Gastrocnemius medialis (tissue), 4 donors: ENCODE measurements at regions of chr18 and their contacts with region 1.

Region 1: DNA sequence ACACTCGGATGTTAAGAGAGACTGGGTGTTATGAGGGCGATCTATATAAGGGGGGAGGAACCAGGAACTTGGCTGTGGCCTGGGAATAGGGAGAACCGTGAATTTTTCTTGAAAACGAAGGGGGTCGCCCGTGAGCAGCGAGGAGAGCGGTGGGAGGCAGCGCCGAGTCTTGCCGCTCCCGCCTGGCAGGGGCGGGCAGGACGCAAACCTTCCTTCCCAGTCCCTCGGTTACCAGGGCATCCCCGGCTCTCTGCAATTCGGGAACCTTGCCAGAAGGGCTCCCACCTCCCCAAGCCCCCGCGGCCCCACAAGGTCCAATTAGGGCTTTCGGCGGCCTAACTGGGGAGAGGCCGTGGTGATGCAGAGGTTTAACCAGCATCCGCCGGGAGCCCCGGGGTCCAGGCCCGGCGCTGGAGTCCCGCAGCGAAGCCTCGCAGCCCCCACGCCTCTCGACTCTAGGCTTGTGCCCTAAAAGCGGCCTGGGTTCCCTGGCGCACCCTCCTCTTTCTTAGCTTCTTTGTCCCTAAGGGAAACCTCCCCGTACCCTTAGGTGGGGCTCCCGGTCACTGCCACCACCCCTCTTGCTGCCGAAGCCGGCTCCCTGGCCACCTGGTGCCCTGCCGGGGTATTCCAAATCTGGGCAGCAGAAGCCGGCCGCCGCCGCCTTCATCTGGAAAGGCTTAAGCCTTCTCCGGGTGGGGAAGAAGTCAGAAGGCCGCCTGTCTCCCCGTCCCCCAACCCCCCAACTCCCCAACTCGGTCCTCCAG is 680 bp upstream of the FHOD3 start:
- DNase-seq: no peak
- ATAC-seq: peak; percentile 37 to 38
- H3K4me3 ChIP-seq: peak overlapping the region; percentile 66 to 99 (median 74)
- H3K27ac ChIP-seq: peak overlapping the region; percentile 71 to 87 (median 82)
- H3K4me1 ChIP-seq: peaks cover 9 to 28% of the 10 kb centered on the region in 2 donors
- H3K27me3 ChIP-seq: no peaks in the 10 kb centered on the region
- CTCF ChIP-seq: peak in 1 of 5 experiments; percentile 11
- POLR2A ChIP-seq: no peak

Region 2: GRCh38 chr18:35756506-35757117 is 540.2 kb before region 1 on chr18:
- in situ Hi-C with region 1: loop called in 1 of 4 experiments (anchors 25 kb)
- intact Hi-C with region 1: no loop called
- DNase-seq: peak in 1 of 2 donors; percentile 22
- ATAC-seq: peak; percentile 54 to 66
- H3K4me3 ChIP-seq: no peak overlapping the region
- H3K27ac ChIP-seq: no peak overlapping the region
- H3K4me1 ChIP-seq: no peaks in the 10 kb centered on the region
- H3K27me3 ChIP-seq: no peaks in the 10 kb centered on the region
- CTCF ChIP-seq: peak; percentile 46 to 73 (median 60)
- POLR2A ChIP-seq: no peak

Region 3: DNA sequence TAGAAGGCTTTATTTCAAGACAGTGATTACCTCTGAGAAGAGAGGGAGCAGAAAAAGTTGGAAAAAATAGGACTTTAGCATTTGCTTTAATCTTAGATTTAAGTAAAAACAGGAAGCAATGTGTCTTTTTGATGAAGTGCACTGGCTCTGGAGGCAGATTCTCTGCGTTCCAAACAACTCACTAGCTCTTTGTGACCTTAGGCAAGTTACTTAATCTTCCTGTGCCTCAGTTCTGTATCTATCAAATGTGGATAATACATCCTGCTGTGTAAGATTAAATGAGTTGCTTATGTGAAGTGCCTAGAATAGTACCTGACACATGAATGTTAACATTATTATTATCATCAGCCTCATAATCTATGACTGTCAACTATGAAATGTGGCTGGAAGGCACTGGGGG is 271.8 kb before region 1 on chr18:
- in situ Hi-C with region 1: loop called in 1 of 4 experiments (anchors 5 kb)
- intact Hi-C with region 1: no loop called
- DNase-seq: no peak
- ATAC-seq: no peak
- H3K4me3 ChIP-seq: no peak overlapping the region
- H3K27ac ChIP-seq: no peak overlapping the region
- H3K4me1 ChIP-seq: no peaks in the 10 kb centered on the region
- H3K27me3 ChIP-seq: no peaks in the 10 kb centered on the region
- CTCF ChIP-seq: no peak
- POLR2A ChIP-seq: no peak

Region 4: GRCh38 chr18:36129300-36130038 is 167.4 kb before region 1 on chr18 and contains the starts of genes ELP2 and SLC39A6:
- in situ Hi-C with region 1: no loop called
- intact Hi-C with region 1: loop called (anchors 5 kb)
- DNase-seq: peak; percentile 96 to 98
- ATAC-seq: peak; percentile 96 to 97
- H3K4me3 ChIP-seq: peak within 1 kb of the TSS; percentile 93 to 100 (median 97)
- H3K27ac ChIP-seq: peak within 1 kb of the TSS; percentile 99 to 100 (median 100)
- H3K4me1 ChIP-seq: peaks cover 23 to 30% of the 10 kb centered on the region in 2 donors
- H3K27me3 ChIP-seq: no peaks in the 10 kb centered on the region
- CTCF ChIP-seq: no peak
- POLR2A ChIP-seq: peak; percentile 68 to 72
- total RNA-seq, gene ELP2: 23.7 to 51.0 (median 42.8) TPM
- total RNA-seq, gene SLC39A6: 16.7 to 24.7 (median 18.3) TPM

Region 5: DNA sequence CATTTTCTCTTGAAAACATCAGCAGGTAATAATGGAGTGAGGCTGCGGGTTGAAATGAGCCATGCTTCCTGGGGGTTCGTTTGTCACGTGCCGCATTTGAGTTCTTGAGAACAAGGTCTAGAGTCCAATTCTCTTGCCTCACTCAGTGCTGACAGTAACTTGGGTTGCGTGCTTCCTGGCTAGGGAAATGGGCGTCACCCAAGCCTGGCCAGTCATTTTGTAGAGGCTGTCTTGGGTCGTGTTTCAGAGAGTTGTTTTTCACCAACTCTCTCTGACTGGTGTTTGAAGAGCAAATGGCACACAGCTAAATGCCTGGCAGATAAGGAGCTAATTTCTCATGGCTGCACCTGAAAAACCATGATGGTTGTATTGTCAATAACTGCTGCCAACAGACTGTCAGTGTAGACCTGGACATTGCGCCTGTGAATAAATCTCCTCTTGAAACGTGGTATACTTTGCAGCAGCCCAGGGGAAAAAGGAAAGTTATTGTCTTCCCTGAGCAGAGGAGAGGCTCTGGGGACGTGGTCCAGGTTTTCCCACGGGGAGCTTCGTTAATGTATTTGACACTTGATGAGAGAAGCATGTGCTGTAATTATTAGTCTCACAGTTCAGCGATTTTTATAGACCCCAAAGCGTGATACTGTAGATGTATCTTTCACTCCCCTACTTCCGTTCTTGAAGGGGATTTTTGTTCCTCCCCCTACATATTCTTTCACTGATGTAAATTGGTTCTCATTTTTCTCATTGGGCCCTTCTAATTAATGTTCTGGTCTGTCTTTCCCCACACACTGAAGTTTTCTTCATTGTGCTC is 196.7 kb after region 1 on chr18:
- in situ Hi-C with region 1: no loop called
- intact Hi-C with region 1: loop called (anchors 2 kb)
- DNase-seq: peak; percentile 51 to 85
- ATAC-seq: peak; percentile 98 to 99
- H3K4me3 ChIP-seq: peak overlapping the region; percentile 19 to 50 (median 42)
- H3K27ac ChIP-seq: peak overlapping the region; percentile 61 to 81 (median 77)
- H3K4me1 ChIP-seq: peaks cover 22 to 37% of the 10 kb centered on the region in 2 donors
- H3K27me3 ChIP-seq: no peaks in the 10 kb centered on the region
- CTCF ChIP-seq: no peak
- POLR2A ChIP-seq: peak; percentile 13 to 31

Region 6: DNA sequence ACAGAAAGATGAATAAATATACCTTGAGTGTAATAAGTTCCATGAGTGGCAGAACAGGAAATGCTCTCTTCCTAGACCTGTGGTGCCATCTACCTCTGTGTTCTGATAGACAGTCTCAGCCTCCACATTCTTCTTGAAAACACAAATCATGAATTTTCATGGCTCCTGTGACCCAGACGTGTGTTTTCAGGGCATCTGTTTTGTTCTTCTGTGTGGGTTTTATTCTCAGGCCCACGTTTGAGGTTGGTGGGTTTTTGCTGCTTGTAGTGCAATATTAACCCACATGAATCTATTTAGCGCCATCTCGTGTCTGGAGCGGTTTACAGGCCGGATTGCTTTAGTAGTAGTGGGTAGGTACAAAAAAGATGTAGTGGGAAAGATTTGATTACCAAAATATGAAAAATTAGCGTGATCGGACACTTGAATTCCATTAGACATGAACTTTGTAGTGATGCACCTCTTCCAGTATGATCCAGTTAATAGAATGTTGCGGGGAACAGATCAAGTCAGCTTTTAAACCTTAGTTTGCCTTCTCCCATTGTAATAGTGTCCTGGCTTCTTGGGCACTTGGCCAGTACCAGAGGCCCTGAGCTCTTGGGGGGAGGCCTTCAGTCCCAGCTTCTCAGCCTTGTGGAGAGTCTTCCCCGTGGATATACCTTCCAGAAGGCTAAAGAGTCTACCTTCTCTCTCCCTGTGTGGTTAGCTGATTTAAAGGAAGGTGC is 275.5 kb after region 1 on chr18:
- in situ Hi-C with region 1: loop called in 1 of 4 experiments (anchors 25 kb)
- intact Hi-C with region 1: loop called (anchors 2 kb)
- DNase-seq: peak in 1 of 2 donors; percentile 42
- ATAC-seq: peak; percentile 77 to 90
- H3K4me3 ChIP-seq: no peak overlapping the region
- H3K27ac ChIP-seq: no peak overlapping the region
- H3K4me1 ChIP-seq: peaks cover 0 to 6% of the 10 kb centered on the region in 2 donors
- H3K27me3 ChIP-seq: no peaks in the 10 kb centered on the region
- CTCF ChIP-seq: peak; percentile 25 to 56 (median 50)
- POLR2A ChIP-seq: no peak